K562 (cell line): ENCODE measurements at regions of chr19 and their contacts with region 1.

Region 1: GRCh38 chr19:40221858-40222837 is 4.0 kb upstream of the TTC9B start:
- DNase-seq: peak; percentile 84 to 96 (median 89)
- ATAC-seq: peak; percentile 85
- H3K4me3 ChIP-seq: no peak overlapping the region
- H3K27ac ChIP-seq: no peak overlapping the region
- H3K4me1 ChIP-seq: peaks cover 12 to 45% of the 10 kb centered on the region in 2 experiments; a peak in 4 of 5 replicates
- H3K27me3 ChIP-seq: peaks cover 0 to 3% of the 10 kb centered on the region in 2 experiments; a peak in 1 of 5 replicates
- CTCF ChIP-seq: peak; percentile 79 to 94 (median 91)
- EP300 ChIP-seq: no peak
- POLR2A ChIP-seq: no peak
- RAD21 ChIP-seq: peak; percentile 86 to 93

Region 2: DNA sequence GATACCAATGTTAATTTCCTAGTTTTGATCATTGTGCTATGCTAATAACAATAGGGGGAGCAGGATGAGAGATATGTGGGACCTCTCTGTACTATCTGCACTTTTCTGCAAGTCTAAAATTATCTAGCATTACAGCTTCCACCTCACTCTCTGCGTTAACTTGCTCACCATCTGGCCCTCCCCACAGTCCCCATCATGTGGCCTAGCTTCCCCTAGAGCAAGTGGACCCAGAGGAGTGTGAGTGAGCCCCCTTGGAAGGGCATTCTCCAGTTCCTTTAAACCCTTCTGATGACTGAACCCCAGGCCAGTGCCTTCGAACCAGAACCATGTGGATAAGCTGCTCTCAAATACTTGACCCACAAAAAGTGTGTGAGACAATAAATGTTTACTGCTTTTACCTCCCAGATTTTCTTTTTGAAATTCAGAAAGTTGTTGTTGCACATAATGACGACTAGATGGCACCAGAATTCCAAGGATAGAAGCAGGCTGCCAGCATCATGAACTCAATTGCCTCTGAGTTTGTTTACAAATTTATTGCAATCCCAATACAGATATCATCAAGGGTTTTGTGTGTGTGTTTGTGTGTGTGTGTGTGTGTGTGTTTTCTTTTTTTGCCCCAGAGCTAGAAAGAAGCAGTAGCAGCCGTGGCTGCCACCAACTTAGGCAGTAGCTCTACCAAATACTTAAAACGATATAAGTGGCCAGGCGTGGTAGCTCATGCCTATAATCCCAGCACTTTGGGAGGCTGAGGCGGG is 82.4 kb before region 1 on chr19:
- CTCF ChIA-PET with region 1: interaction called, 24 read pairs
- POLR2A ChIA-PET with region 1: no interaction called
- in situ Hi-C with region 1: no loop called
- intact Hi-C with region 1: loop called (anchors 2 kb)
- DNase-seq: peak; percentile 35 to 56 (median 44)
- ATAC-seq: peak; percentile 52; the same call in 2 of the 3 replicates
- H3K4me3 ChIP-seq: no peak overlapping the region
- H3K27ac ChIP-seq: no peak overlapping the region
- H3K4me1 ChIP-seq: no peaks in the 10 kb centered on the region; a peak in 1 of 5 replicates
- H3K27me3 ChIP-seq: peaks cover 6 to 10% of the 10 kb centered on the region in 2 experiments
- CTCF ChIP-seq: peak; percentile 67 to 93 (median 76); a peak in 5 of 6 replicates
- EP300 ChIP-seq: no peak
- POLR2A ChIP-seq: no peak
- RAD21 ChIP-seq: peak; percentile 89 to 95

Region 3: GRCh38 chr19:40147693-40148347 is 74.3 kb before region 1 on chr19:
- CTCF ChIA-PET with region 1: no interaction called
- POLR2A ChIA-PET with region 1: interaction called, 3 read pairs
- in situ Hi-C with region 1: loop called (anchors 5 kb)
- intact Hi-C with region 1: no loop called
- DNase-seq: peak in 1 of 4 experiments; percentile 25
- ATAC-seq: peak; percentile 56
- H3K4me3 ChIP-seq: no peak overlapping the region
- H3K27ac ChIP-seq: no peak overlapping the region
- H3K4me1 ChIP-seq: peaks cover 0 to 6% of the 10 kb centered on the region in 2 experiments; a peak in 2 of 5 replicates
- H3K27me3 ChIP-seq: peaks cover 7 to 15% of the 10 kb centered on the region in 2 experiments; a peak in 4 of 5 replicates
- CTCF ChIP-seq: no peak
- EP300 ChIP-seq: no peak
- POLR2A ChIP-seq: no peak
- RAD21 ChIP-seq: no peak

Region 4: GRCh38 chr19:40155749-40156265 is 66.3 kb before region 1 on chr19:
- CTCF ChIA-PET with region 1: interaction called, 9 read pairs
- POLR2A ChIA-PET with region 1: no interaction called
- in situ Hi-C with region 1: no loop called
- intact Hi-C with region 1: loop called (anchors 1 kb)
- DNase-seq: peak; percentile 33 to 71 (median 45)
- ATAC-seq: peak; percentile 84
- H3K4me3 ChIP-seq: no peak overlapping the region
- H3K27ac ChIP-seq: no peak overlapping the region
- H3K4me1 ChIP-seq: no peaks in the 10 kb centered on the region; a peak in 2 of 5 replicates
- H3K27me3 ChIP-seq: peaks cover 0 to 4% of the 10 kb centered on the region in 2 experiments; a peak in 2 of 5 replicates
- CTCF ChIP-seq: peak; percentile 73 to 74 (median 73)
- EP300 ChIP-seq: no peak
- POLR2A ChIP-seq: no peak
- RAD21 ChIP-seq: peak; percentile 48 to 73

Region 5: GRCh38 chr19:40191836-40192646 is 30.1 kb before region 1 on chr19:
- CTCF ChIA-PET with region 1: interaction called, 6 read pairs
- POLR2A ChIA-PET with region 1: no interaction called
- in situ Hi-C with region 1: no loop called
- intact Hi-C with region 1: loop called (anchors 2 kb)
- DNase-seq: peak; percentile 66 to 87 (median 76)
- ATAC-seq: peak; percentile 81
- H3K4me3 ChIP-seq: peak overlapping the region; percentile 100
- H3K27ac ChIP-seq: no peak overlapping the region
- H3K4me1 ChIP-seq: peaks cover 0 to 21% of the 10 kb centered on the region in 2 experiments; a peak in 4 of 5 replicates
- H3K27me3 ChIP-seq: no peaks in the 10 kb centered on the region
- CTCF ChIP-seq: peak in 2 of 3 experiments; percentile 48 to 56; a peak in 3 of 6 replicates
- EP300 ChIP-seq: no peak
- POLR2A ChIP-seq: no peak
- RAD21 ChIP-seq: peak; percentile 23 to 48; a peak in 2 of 4 replicates

Region 6: GRCh38 chr19:40266119-40266518 is 44.0 kb after region 1 on chr19:
- CTCF ChIA-PET with region 1: no interaction called
- POLR2A ChIA-PET with region 1: no interaction called
- in situ Hi-C with region 1: no loop called
- intact Hi-C with region 1: no loop called
- DNase-seq: no peak
- ATAC-seq: no peak
- H3K4me3 ChIP-seq: no peak overlapping the region
- H3K27ac ChIP-seq: no peak overlapping the region
- H3K4me1 ChIP-seq: peaks cover 32 to 68% of the 10 kb centered on the region in 2 experiments; a peak in 4 of 5 replicates
- H3K27me3 ChIP-seq: no peaks in the 10 kb centered on the region
- CTCF ChIP-seq: no peak
- EP300 ChIP-seq: no peak
- POLR2A ChIP-seq: no peak
- RAD21 ChIP-seq: no peak